Right cardiac atrium (tissue), 5 donors: ENCODE measurements at regions of chr11 and their contacts with region 1.

Region 1: GRCh38 chr11:2428322-2428795 is 16.0 kb downstream of the TRPM5 start:
- DNase-seq: peak; percentile 62 to 91 (median 86)
- ATAC-seq: peak; percentile 62 to 73
- H3K4me3 ChIP-seq: no peak overlapping the region
- H3K27ac ChIP-seq: no peak overlapping the region
- H3K4me1 ChIP-seq: no peaks in the 10 kb centered on the region
- H3K27me3 ChIP-seq: no peaks in the 10 kb centered on the region

Region 2: DNA sequence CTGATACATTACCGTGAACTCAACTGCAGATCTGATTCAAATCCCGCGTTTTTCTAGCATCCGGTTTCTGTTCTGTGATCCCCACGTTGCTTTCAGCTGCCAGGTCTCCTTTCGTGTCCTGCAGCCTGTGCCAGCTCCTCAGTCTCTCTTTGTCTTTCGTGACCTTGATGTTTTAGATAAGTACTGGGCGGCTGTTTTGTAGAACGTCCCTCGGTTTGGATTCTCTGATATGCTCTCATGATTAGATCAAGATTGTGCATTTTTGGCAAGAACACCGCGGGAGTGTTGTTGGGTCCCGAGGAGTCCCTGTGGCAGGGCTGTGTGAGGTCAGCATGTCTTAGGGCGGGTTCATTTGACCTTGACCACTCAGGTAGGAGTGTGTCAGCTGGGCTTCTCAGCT is 55.1 kb after region 1 on chr11:
- intact Hi-C with region 1: no loop called
- DNase-seq: no peak
- ATAC-seq: no peak
- H3K4me3 ChIP-seq: no peak overlapping the region
- H3K27ac ChIP-seq: no peak overlapping the region
- H3K4me1 ChIP-seq: peaks cover 4% of the 10 kb centered on the region
- H3K27me3 ChIP-seq: no peaks in the 10 kb centered on the region

Region 3: GRCh38 chr11:2498750-2499149 is 70.4 kb after region 1 on chr11:
- intact Hi-C with region 1: no loop called
- DNase-seq: no peak
- ATAC-seq: no peak
- H3K4me3 ChIP-seq: no peak overlapping the region
- H3K27ac ChIP-seq: no peak overlapping the region
- H3K4me1 ChIP-seq: no peaks in the 10 kb centered on the region
- H3K27me3 ChIP-seq: no peaks in the 10 kb centered on the region

Region 4: GRCh38 chr11:2526808-2527381 is 98.5 kb after region 1 on chr11:
- intact Hi-C with region 1: loop called (anchors 1 to 2 kb)
- DNase-seq: peak; percentile 51 to 83 (median 82)
- ATAC-seq: peak in 1 of 2 donors; percentile 25
- H3K4me3 ChIP-seq: no peak overlapping the region
- H3K27ac ChIP-seq: no peak overlapping the region
- H3K4me1 ChIP-seq: no peaks in the 10 kb centered on the region
- H3K27me3 ChIP-seq: no peaks in the 10 kb centered on the region

Region 5: GRCh38 chr11:2532704-2533586 is 104.6 kb after region 1 on chr11:
- intact Hi-C with region 1: loop called (anchors 1 to 2 kb)
- DNase-seq: peak; percentile 89 to 96 (median 95)
- ATAC-seq: peak; percentile 83 to 88
- H3K4me3 ChIP-seq: peak overlapping the region; percentile 3
- H3K27ac ChIP-seq: no peak overlapping the region
- H3K4me1 ChIP-seq: peaks cover 3% of the 10 kb centered on the region
- H3K27me3 ChIP-seq: no peaks in the 10 kb centered on the region

Region 6: DNA sequence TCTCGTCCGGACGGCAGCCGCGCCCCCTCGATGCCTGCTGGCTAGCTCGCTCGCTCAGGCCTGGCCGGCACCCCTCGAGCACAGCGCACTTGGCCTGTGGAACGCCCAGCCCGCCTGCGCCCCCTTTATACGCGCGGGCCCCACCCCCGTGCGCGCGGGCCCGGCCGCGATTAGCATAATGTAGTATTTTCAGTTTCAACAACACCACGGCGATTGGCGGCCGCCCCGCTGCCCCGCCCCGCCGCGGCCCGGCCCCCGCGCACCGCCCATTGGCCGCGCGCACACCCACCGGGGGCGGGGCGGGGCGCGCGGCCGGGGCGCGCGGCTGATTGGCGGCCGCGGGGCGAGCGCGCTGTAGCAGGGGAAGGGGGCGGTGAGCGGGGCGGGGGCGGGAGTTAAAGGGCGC is 457.3 kb after region 1 on chr11 and contains the start of gene CDKN1C:
- intact Hi-C with region 1: loop called (anchors 2 to 10 kb)
- DNase-seq: peak; percentile 88 to 97 (median 96)
- ATAC-seq: peak; percentile 80 to 82
- H3K4me3 ChIP-seq: peak within 1 kb of the TSS; percentile 88
- H3K27ac ChIP-seq: peak within 1 kb of the TSS; percentile 62
- H3K4me1 ChIP-seq: peaks cover under 1% of the 10 kb centered on the region
- H3K27me3 ChIP-seq: no peaks in the 10 kb centered on the region
- total RNA-seq, gene CDKN1C: 16.1 to 26.3 (median 21.4) TPM

Region 7: GRCh38 chr11:2892215-2893020 is 464.1 kb after region 1 on chr11:
- intact Hi-C with region 1: loop called (anchors 2 to 10 kb)
- DNase-seq: peak; percentile 70 to 89 (median 83)
- ATAC-seq: peak; percentile 56 to 61
- H3K4me3 ChIP-seq: peak overlapping the region; percentile 8
- H3K27ac ChIP-seq: peak overlapping the region; percentile 3
- H3K4me1 ChIP-seq: peaks cover 8% of the 10 kb centered on the region
- H3K27me3 ChIP-seq: no peaks in the 10 kb centered on the region